ENCODE measurements at regions of chr9 and their contacts with region 1.

Region 1: GRCh38 chr9:91949946-91950664 is at the start of gene ROR2:
- DNase-seq: peak; percentile 67 to 87 (median 79)
- ATAC-seq: peak; percentile 85
- H3K4me3 ChIP-seq: peak within 1 kb of the TSS; percentile 22
- H3K4me1 ChIP-seq: peaks cover 35% of the 10 kb centered on the region
- CTCF ChIP-seq: peak; percentile 60
- total RNA-seq, gene ROR2: 3.9 to 56.0 (median 6.5) TPM

Region 2: GRCh38 chr9:91734371-91734981 is 215.6 kb before region 1 on chr9:
- intact Hi-C with region 1: loop called in 1 of 2 experiments (anchors 10 kb)
- DNase-seq: peak in 2 of 3 donors; percentile 81 to 87
- ATAC-seq: peak; percentile 77
- H3K4me3 ChIP-seq: no peak overlapping the region
- H3K4me1 ChIP-seq: no peaks in the 10 kb centered on the region
- CTCF ChIP-seq: peak; percentile 94

Region 3: GRCh38 chr9:92035687-92036410 is 85.7 kb after region 1 on chr9:
- intact Hi-C with region 1: loop called in 1 of 2 experiments (anchors 10 kb)
- DNase-seq: peak in 1 of 3 donors; percentile 42
- ATAC-seq: peak; percentile 53
- H3K4me3 ChIP-seq: no peak overlapping the region
- H3K4me1 ChIP-seq: no peaks in the 10 kb centered on the region
- CTCF ChIP-seq: no peak

Region 4: DNA sequence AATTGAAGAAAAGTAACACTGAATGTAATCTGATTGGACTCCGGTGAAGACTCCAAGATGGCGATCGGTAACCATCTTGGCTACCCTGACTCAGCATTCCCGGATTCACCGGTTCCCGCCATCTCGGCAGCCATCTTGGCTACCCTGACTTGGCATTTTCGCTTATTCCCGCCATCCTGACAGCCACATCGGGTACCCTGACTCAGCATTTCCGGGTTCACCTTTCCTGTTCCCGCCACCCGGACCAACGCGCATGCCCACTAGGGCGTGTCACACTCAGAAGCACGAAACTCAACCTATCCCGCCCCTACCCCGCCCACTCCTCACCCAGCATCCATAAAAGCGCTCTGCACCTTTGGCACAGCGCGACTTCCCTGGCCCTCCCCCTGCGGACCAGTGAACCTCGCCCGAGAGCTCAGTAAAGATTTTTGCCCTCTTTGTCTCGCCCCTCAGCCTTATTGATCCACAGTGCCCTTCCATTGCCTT is 147.9 kb after region 1 on chr9:
- intact Hi-C with region 1: no loop called
- DNase-seq: peak; percentile 94 to 96 (median 94)
- ATAC-seq: peak; percentile 96
- H3K4me3 ChIP-seq: no peak overlapping the region
- H3K4me1 ChIP-seq: no peaks in the 10 kb centered on the region
- CTCF ChIP-seq: no peak